ENCODE measurements at regions of chr21 and their contacts with region 1.

Region 1: GRCh38 chr21:29571949-29572348 is 273.2 kb downstream of the BACH1 start:
- DNase-seq: no peak
- ATAC-seq: no peak

Region 2: GRCh38 chr21:29834617-29835016 is 262.7 kb after region 1 on chr21:
- intact Hi-C with region 1: loop called (anchors 5 kb)
- DNase-seq: no peak
- ATAC-seq: no peak

Measured in Right ventricle myocardium inferior (tissue), 1 donor.